CD8-positive, alpha-beta T cell (primary cell): ENCODE measurements at regions of chr19 and their contacts with region 1.

Region 1: GRCh38 chr19:46392243-46392801 is 21.0 kb downstream of the CCDC8 start:
- DNase-seq: no peak
- ATAC-seq: no peak
- H3K4me3 ChIP-seq: no peak overlapping the region
- H3K4me3 Mint-ChIP-seq: no peak overlapping the region
- H3K27ac ChIP-seq: no peak overlapping the region
- H3K27ac Mint-ChIP-seq: no peak overlapping the region
- H3K4me1 ChIP-seq: no peaks in the 10 kb centered on the region
- H3K4me1 Mint-ChIP-seq: peaks cover 9% of the 10 kb centered on the region
- H3K27me3 ChIP-seq: no peaks in the 10 kb centered on the region
- H3K27me3 Mint-ChIP-seq: no peaks in the 10 kb centered on the region
- CTCF ChIP-seq: no peak

Region 2: GRCh38 chr19:46133101-46133682 is 259.1 kb before region 1 on chr19:
- CTCF ChIA-PET with region 1: no interaction called
- POLR2A ChIA-PET with region 1: no interaction called
- intact Hi-C with region 1: no loop called
- DNase-seq: no peak
- ATAC-seq: no peak
- H3K4me3 ChIP-seq: no peak overlapping the region
- H3K4me3 Mint-ChIP-seq: no peak overlapping the region
- H3K27ac ChIP-seq: no peak overlapping the region
- H3K27ac Mint-ChIP-seq: no peak overlapping the region
- H3K4me1 ChIP-seq: no peaks in the 10 kb centered on the region
- H3K4me1 Mint-ChIP-seq: no peaks in the 10 kb centered on the region
- H3K27me3 ChIP-seq: no peaks in the 10 kb centered on the region
- H3K27me3 Mint-ChIP-seq: peaks cover 46% of the 10 kb centered on the region
- CTCF ChIP-seq: no peak

Region 3: DNA sequence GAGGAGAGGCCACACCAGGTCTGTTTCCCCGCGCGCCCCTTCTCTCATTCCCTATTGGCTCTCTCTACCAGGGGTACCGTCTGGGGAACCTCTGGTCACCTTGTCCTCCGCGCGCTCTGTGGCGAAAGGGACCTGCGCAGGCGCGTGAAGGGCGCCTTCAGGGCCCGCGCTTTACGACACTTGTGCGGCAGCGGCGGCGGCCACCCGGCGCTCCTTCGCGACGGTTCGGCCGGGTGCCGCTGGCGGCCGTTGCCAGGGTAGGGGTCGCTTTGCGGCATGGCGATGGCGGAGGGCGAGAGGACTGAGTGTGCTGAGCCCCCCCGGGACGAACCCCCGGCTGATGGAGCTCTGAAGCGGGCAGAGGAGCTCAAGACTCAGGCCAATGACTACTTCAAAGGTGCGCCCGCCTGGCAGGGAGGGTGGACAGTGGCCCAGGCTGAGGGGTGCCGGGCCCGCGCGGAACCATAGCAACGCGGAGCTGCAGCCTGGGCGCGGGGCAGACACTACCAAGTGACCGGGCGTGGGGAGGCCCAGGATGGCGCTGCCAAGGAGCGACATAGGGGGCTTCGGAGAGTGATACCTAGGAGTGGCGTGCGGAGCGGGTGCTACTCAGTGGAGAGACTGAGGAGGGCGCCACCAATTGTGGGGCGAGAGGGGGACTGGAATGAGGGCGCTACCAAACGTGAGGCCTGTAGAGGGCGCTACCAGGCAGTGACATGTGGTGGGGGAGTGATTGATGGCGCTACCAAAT is 45.3 kb before region 1 on chr19 and contains the start of gene PPP5C:
- CTCF ChIA-PET with region 1: interaction called, 7 read pairs
- POLR2A ChIA-PET with region 1: no interaction called
- intact Hi-C with region 1: loop called in 1 of 2 experiments (anchors 2 kb)
- DNase-seq: peak; percentile 63 to 92 (median 84)
- ATAC-seq: peak; percentile 85
- H3K4me3 ChIP-seq: peak within 1 kb of the TSS; percentile 97 to 99
- H3K4me3 Mint-ChIP-seq: peak within 1 kb of the TSS; percentile 95
- H3K27ac ChIP-seq: peak within 1 kb of the TSS; percentile 57 to 86
- H3K27ac Mint-ChIP-seq: peak within 1 kb of the TSS; percentile 92
- H3K4me1 ChIP-seq: peaks cover 51% of the 10 kb centered on the region
- H3K4me1 Mint-ChIP-seq: peaks cover 54% of the 10 kb centered on the region
- H3K27me3 ChIP-seq: no peaks in the 10 kb centered on the region
- H3K27me3 Mint-ChIP-seq: no peaks in the 10 kb centered on the region
- CTCF ChIP-seq: peak; percentile 61
- total RNA-seq, gene PPP5C: 24.6 to 25.7 TPM

Region 4: GRCh38 chr19:46404055-46404752 is 11.9 kb after region 1 on chr19:
- CTCF ChIA-PET with region 1: interaction called, 14 read pairs
- POLR2A ChIA-PET with region 1: interaction called, 3 read pairs
- intact Hi-C with region 1: no loop called
- DNase-seq: no peak
- ATAC-seq: no peak
- H3K4me3 ChIP-seq: peak overlapping the region; percentile 21 to 37
- H3K4me3 Mint-ChIP-seq: peak overlapping the region; percentile 70
- H3K27ac ChIP-seq: no peak overlapping the region
- H3K27ac Mint-ChIP-seq: no peak overlapping the region
- H3K4me1 ChIP-seq: peaks cover 16% of the 10 kb centered on the region
- H3K4me1 Mint-ChIP-seq: peaks cover 21% of the 10 kb centered on the region
- H3K27me3 ChIP-seq: peaks cover 36% of the 10 kb centered on the region in 2 experiments
- H3K27me3 Mint-ChIP-seq: peaks cover 64% of the 10 kb centered on the region
- CTCF ChIP-seq: no peak

Region 5: DNA sequence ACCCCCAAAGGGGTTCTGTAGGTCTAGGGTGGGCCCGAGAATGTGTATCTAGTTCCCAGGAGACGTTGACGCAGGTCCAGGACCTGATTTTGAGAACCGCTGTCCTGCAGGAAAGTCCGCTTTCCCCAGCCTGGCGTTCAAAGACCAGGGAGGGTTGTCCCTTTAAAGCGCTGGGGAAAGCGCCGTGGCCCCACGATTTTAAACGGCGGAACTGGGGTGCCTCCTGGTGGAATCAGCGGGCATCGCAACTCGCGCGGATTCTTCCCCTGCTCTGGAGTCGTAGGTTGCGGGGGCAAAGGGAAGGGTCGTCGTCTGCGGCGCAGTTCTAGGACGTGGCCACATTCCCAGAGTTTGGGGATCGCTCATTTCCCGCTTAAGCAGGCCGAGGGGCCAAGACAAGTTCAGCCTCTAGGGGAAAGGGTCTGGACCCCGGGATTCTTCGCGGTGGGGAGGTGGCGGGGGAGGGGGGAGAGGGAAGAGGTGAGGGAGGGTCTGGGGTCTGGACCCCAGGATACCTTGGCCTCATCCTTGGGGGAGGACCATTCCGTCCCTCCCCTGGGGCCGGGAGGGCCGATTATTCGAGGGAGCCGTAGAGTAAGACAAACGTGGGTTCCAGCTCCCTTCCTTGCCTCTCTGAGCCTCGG is 95.6 kb after region 1 on chr19:
- CTCF ChIA-PET with region 1: interaction called, 36 read pairs
- POLR2A ChIA-PET with region 1: no interaction called
- intact Hi-C with region 1: loop called (anchors 1 kb)
- DNase-seq: peak; percentile 58 to 86 (median 73)
- ATAC-seq: peak; percentile 87
- H3K4me3 ChIP-seq: no peak overlapping the region
- H3K4me3 Mint-ChIP-seq: no peak overlapping the region
- H3K27ac ChIP-seq: no peak overlapping the region
- H3K27ac Mint-ChIP-seq: no peak overlapping the region
- H3K4me1 ChIP-seq: peaks cover 33% of the 10 kb centered on the region
- H3K4me1 Mint-ChIP-seq: peaks cover 22% of the 10 kb centered on the region
- H3K27me3 ChIP-seq: peaks cover 42 to 46% of the 10 kb centered on the region in 2 experiments
- H3K27me3 Mint-ChIP-seq: peaks cover 58% of the 10 kb centered on the region
- CTCF ChIP-seq: peak; percentile 76

Region 6: DNA sequence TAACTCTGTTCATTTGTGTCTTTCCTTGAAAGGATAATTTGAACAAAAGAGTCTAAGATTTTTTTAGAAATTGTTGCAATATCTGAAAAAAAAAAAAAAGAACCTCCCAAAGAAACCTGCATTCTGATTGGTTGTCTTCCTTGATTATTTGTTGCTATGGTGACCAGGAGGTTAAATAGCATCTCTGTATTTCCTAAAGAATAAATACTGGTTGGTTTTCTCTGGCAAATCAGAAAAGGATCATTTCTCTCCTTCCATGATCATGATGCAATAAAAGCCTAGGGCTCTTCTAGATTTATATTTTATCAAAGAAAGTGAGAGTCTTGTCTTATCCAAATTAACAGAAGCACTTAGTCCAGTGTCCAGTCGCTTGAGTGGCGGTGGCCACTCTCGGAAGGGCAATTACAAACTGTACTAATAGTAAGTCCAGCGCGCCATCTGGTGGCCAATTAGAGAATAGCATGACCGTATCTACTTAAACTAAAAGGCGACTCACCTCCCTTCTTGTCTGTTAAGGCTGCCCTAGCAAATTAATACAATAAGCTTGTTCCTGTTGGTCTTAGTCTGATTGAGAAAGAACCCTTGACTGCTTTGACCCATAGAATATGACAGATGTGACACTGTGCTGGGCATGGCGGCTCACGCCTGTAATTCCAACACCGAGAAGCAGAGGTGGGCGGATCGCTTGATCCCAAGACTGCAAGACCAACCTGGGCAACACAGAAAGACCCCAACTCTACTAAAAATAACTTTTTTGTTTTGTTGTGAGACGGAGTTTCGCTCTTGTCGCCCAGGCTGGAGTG is 150.3 kb after region 1 on chr19:
- CTCF ChIA-PET with region 1: interaction called, 5 read pairs
- POLR2A ChIA-PET with region 1: no interaction called
- intact Hi-C with region 1: loop called in 1 of 2 experiments (anchors 1 kb)
- DNase-seq: peak; percentile 59 to 87 (median 82)
- ATAC-seq: peak; percentile 67
- H3K4me3 ChIP-seq: no peak overlapping the region
- H3K4me3 Mint-ChIP-seq: no peak overlapping the region
- H3K27ac ChIP-seq: no peak overlapping the region
- H3K27ac Mint-ChIP-seq: no peak overlapping the region
- H3K4me1 ChIP-seq: no peaks in the 10 kb centered on the region
- H3K4me1 Mint-ChIP-seq: peaks cover 3% of the 10 kb centered on the region
- H3K27me3 ChIP-seq: peaks cover 0 to 3% of the 10 kb centered on the region in 2 experiments
- H3K27me3 Mint-ChIP-seq: no peaks in the 10 kb centered on the region
- CTCF ChIP-seq: peak; percentile 86